ENCODE measurements at regions of chr11 and their contacts with region 1.

Region 1: GRCh38 chr11:2420502-2421225 is 20.1 kb downstream of the TSSC4 start:
- DNase-seq: peak; percentile 66
- H3K4me3 Mint-ChIP-seq: no peak overlapping the region
- H3K27ac Mint-ChIP-seq: no peak overlapping the region
- H3K4me1 Mint-ChIP-seq: no peaks in the 10 kb centered on the region
- H3K27me3 Mint-ChIP-seq: no peaks in the 10 kb centered on the region

Region 2: GRCh38 chr11:2186669-2187279 is 233.9 kb before region 1 on chr11:
- CTCF ChIA-PET with region 1: interaction called, 12 read pairs
- POLR2A ChIA-PET with region 1: no interaction called
- DNase-seq: peak; percentile 47
- H3K4me3 Mint-ChIP-seq: no peak overlapping the region
- H3K27ac Mint-ChIP-seq: no peak overlapping the region
- H3K4me1 Mint-ChIP-seq: peaks cover 3% of the 10 kb centered on the region
- H3K27me3 Mint-ChIP-seq: peaks cover 2% of the 10 kb centered on the region

Region 3: GRCh38 chr11:2295971-2296912 is 124.4 kb before region 1 on chr11:
- CTCF ChIA-PET with region 1: interaction called, 37 read pairs
- POLR2A ChIA-PET with region 1: no interaction called
- DNase-seq: peak; percentile 4
- H3K4me3 Mint-ChIP-seq: no peak overlapping the region
- H3K27ac Mint-ChIP-seq: peak overlapping the region; percentile 13
- H3K4me1 Mint-ChIP-seq: peaks cover 30% of the 10 kb centered on the region
- H3K27me3 Mint-ChIP-seq: no peaks in the 10 kb centered on the region

Region 4: GRCh38 chr11:2314525-2315394 is 105.9 kb before region 1 on chr11:
- CTCF ChIA-PET with region 1: interaction called, 134 read pairs
- POLR2A ChIA-PET with region 1: no interaction called
- DNase-seq: no peak
- H3K4me3 Mint-ChIP-seq: no peak overlapping the region
- H3K27ac Mint-ChIP-seq: no peak overlapping the region
- H3K4me1 Mint-ChIP-seq: no peaks in the 10 kb centered on the region
- H3K27me3 Mint-ChIP-seq: peaks cover 1% of the 10 kb centered on the region

Region 5: DNA sequence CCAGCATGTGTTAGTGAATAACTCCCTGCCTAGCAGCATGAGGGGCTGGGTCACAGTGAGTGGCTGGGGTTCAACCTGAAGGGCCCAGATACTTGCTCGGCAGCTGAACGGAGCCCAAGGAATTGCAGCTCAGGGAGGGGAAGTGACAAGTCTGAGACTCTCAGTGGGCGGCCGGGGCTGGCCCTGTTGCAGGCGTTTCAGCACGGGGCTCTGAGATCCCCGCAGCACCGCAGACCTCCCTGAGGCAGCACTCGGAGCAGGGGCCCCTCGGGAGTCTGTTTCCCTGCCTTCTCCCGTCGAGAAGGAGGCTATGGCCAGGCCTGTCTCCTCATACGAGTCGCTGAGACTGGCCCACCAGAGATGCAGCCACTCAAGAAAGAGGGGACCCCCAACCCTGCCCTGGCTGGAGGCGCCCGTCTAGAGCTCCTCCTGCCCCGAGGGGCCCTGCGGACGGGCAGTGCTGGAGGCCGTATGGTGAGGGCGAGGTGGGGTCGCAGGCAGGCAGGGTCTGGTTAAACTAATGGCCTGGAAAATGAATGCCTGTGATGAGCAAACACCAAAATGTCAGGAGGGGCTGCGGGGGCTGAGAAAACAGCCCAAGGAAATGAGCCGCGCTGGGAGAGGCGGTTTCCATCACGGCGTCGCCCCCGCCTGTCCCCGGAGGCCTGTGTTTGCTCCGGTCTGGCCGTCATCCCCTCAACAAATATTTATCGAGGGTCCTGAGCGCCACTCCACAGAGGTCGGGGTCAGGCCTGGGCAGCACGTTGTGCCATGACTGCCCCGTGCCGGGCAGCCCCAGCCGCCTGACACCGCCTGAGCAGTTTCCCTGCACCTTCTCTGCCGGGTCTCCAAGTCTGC is 10.8 kb before region 1 on chr11:
- CTCF ChIA-PET with region 1: interaction called, 20 read pairs
- POLR2A ChIA-PET with region 1: no interaction called
- DNase-seq: no peak
- H3K4me3 Mint-ChIP-seq: no peak overlapping the region
- H3K27ac Mint-ChIP-seq: no peak overlapping the region
- H3K4me1 Mint-ChIP-seq: no peaks in the 10 kb centered on the region
- H3K27me3 Mint-ChIP-seq: no peaks in the 10 kb centered on the region

Measured in activated CD4-positive, alpha-beta T cell treated with anti-CD3 and anti-CD28 coated beads, Interleukin-2, amount 10 ng/mL, durations not matched to agents 7 days and 5 days (primary cell).